ENCODE measurements at regions of chr7 and their contacts with region 1.

Region 1: GRCh38 chr7:113015032-113015645 is 71.5 kb downstream of the GPR85 start:
- DNase-seq: peak; percentile 3
- H3K4me3 Mint-ChIP-seq: no peak overlapping the region
- H3K27ac Mint-ChIP-seq: no peak overlapping the region
- H3K4me1 Mint-ChIP-seq: no peaks in the 10 kb centered on the region
- H3K27me3 Mint-ChIP-seq: no peaks in the 10 kb centered on the region
- CTCF ChIP-seq: no peak

Region 2: GRCh38 chr7:112550468-112551060 is 464.6 kb before region 1 on chr7:
- CTCF ChIA-PET with region 1: no interaction called
- intact Hi-C with region 1: loop called (anchors 2 kb)
- DNase-seq: peak; percentile 45
- H3K4me3 Mint-ChIP-seq: no peak overlapping the region
- H3K27ac Mint-ChIP-seq: no peak overlapping the region
- H3K4me1 Mint-ChIP-seq: no peaks in the 10 kb centered on the region
- H3K27me3 Mint-ChIP-seq: no peaks in the 10 kb centered on the region
- CTCF ChIP-seq: peak; percentile 62

Region 3: DNA sequence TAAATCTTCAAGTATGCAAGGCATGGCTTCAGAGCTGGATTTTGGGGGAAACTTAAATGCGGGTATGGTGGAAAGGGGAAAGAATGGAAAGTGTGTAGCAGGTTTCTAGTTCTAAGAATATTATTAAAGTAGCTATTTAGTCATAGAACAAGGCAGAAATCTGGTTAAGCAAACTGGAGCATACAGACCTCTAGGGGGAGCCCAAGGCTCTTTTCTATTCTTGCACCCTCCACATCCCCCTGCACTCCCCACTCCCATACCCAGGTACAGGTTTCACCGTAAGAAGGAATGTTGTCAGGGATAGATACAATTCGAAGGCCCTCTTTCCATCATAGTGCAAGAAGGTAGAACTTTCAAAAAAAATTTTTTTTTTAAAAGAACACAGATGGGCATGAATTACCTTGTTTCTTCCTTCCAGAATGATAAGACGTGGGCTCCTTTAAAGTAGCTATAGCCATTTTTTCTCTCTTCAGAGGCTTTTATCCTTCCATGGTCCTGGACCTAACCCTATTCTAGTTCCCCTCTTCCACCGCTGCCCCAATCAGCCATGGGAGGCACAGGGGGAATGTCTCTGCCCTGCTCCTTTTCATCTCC is 144.7 kb after region 1 on chr7:
- CTCF ChIA-PET with region 1: no interaction called
- intact Hi-C with region 1: loop called (anchors 10 kb)
- DNase-seq: peak; percentile 54
- H3K4me3 Mint-ChIP-seq: no peak overlapping the region
- H3K27ac Mint-ChIP-seq: no peak overlapping the region
- H3K4me1 Mint-ChIP-seq: no peaks in the 10 kb centered on the region
- H3K27me3 Mint-ChIP-seq: no peaks in the 10 kb centered on the region
- CTCF ChIP-seq: peak; percentile 71

Region 4: GRCh38 chr7:113289140-113289740 is 274.1 kb after region 1 on chr7:
- CTCF ChIA-PET with region 1: interaction called, 3 read pairs
- intact Hi-C with region 1: loop called (anchors 1 kb)
- DNase-seq: peak; percentile 31
- H3K4me3 Mint-ChIP-seq: no peak overlapping the region
- H3K27ac Mint-ChIP-seq: no peak overlapping the region
- H3K4me1 Mint-ChIP-seq: no peaks in the 10 kb centered on the region
- H3K27me3 Mint-ChIP-seq: no peaks in the 10 kb centered on the region
- CTCF ChIP-seq: no peak

Region 5: DNA sequence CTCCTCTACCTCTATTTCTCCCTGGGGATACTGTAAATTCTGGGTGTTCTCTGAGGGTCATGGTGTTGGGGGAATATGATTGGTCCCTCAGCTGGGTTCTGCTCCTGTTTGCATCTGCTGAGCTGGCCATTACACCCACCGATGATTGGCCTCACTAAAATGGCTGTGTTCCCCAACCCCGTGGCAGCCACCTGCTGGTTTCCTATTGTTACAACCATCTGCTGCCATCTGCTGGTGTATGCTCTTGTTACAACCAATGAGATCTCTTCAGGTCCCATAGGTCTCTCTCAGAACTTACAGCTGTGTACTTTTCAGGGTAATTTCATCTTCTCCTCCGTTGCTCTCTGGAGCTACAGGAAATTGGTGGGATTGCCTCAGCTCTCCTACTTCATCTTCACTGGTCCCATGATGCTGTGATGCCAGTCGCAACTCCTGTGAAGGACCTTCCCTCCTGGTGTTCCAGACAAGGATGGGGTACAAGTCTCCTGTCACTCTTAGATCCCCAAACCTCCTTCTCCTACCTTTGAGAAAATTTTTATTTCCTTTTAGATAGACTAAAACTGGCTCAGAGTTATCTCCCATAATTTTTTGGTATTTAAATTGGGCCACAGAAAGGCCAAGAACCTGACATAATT is 406.7 kb after region 1 on chr7:
- CTCF ChIA-PET with region 1: interaction called, 5 read pairs
- intact Hi-C with region 1: loop called (anchors 1 kb)
- DNase-seq: peak; percentile 79
- H3K4me3 Mint-ChIP-seq: no peak overlapping the region
- H3K27ac Mint-ChIP-seq: no peak overlapping the region
- H3K4me1 Mint-ChIP-seq: peaks cover 7% of the 10 kb centered on the region
- H3K27me3 Mint-ChIP-seq: no peaks in the 10 kb centered on the region
- CTCF ChIP-seq: peak; percentile 78

Region 6: GRCh38 chr7:113698556-113699220 is 683.5 kb after region 1 on chr7:
- CTCF ChIA-PET with region 1: no interaction called
- intact Hi-C with region 1: loop called (anchors 2 kb)
- DNase-seq: peak; percentile 3
- H3K4me3 Mint-ChIP-seq: no peak overlapping the region
- H3K27ac Mint-ChIP-seq: no peak overlapping the region
- H3K4me1 Mint-ChIP-seq: no peaks in the 10 kb centered on the region
- H3K27me3 Mint-ChIP-seq: no peaks in the 10 kb centered on the region
- CTCF ChIP-seq: peak; percentile 55

Region 7: GRCh38 chr7:113710310-113711106 is 695.4 kb after region 1 on chr7:
- CTCF ChIA-PET with region 1: no interaction called
- intact Hi-C with region 1: loop called (anchors 1 kb)
- DNase-seq: peak; percentile 68
- H3K4me3 Mint-ChIP-seq: no peak overlapping the region
- H3K27ac Mint-ChIP-seq: no peak overlapping the region
- H3K4me1 Mint-ChIP-seq: no peaks in the 10 kb centered on the region
- H3K27me3 Mint-ChIP-seq: no peaks in the 10 kb centered on the region
- CTCF ChIP-seq: peak; percentile 80

Region 8: GRCh38 chr7:114255404-114255841 is 1240.3 kb after region 1 on chr7:
- CTCF ChIA-PET with region 1: no interaction called
- intact Hi-C with region 1: no loop called
- DNase-seq: peak; percentile 41
- H3K4me3 Mint-ChIP-seq: peak overlapping the region; percentile 67
- H3K27ac Mint-ChIP-seq: peak overlapping the region; percentile 20
- H3K4me1 Mint-ChIP-seq: peaks cover 17% of the 10 kb centered on the region
- H3K27me3 Mint-ChIP-seq: no peaks in the 10 kb centered on the region
- CTCF ChIP-seq: no peak